T-cell (primary cell): ENCODE measurements at regions of chr10 and their contacts with region 1.

Region 1: DNA sequence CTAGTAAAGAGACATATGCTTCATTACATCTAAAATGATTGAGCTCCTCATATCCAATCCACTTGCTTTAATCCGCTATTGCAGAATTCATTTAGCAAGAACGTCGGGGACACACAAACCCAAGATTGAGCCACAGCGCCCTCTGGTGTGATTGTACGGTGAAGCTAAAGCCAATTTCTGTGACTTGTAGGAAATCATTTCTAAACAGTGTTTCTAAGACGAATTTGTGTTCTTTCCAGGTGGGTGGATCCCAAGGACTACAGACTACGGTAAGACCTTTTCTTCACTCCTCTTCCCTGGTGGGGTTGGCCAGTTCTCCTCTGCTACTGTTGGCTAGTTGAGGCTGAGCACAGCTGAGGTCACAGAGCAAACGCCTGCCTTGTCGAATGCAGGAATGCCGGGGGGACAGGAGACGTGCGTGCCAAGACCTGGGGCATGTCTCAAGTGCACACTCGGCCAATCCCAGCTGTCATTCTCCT is 5.2 kb downstream of the DMBT1 start:
- DNase-seq: peak; percentile 18 to 85 (median 67)
- ATAC-seq: peak in 1 of 4 experiments; percentile 44
- H3K4me3 ChIP-seq: no peak overlapping the region
- H3K4me3 Mint-ChIP-seq: no peak overlapping the region
- H3K27ac ChIP-seq: no peak overlapping the region
- H3K27ac Mint-ChIP-seq: no peak overlapping the region
- H3K4me1 ChIP-seq: peaks cover 0 to 6% of the 10 kb centered on the region in 2 experiments
- H3K4me1 Mint-ChIP-seq: peaks cover 12 to 18% (median 15%) of the 10 kb centered on the region in 3 donors
- H3K27me3 ChIP-seq: peaks cover 0 to 23% of the 10 kb centered on the region in 2 experiments
- H3K27me3 Mint-ChIP-seq: peaks cover 27 to 37% of the 10 kb centered on the region in 2 donors

Region 2: DNA sequence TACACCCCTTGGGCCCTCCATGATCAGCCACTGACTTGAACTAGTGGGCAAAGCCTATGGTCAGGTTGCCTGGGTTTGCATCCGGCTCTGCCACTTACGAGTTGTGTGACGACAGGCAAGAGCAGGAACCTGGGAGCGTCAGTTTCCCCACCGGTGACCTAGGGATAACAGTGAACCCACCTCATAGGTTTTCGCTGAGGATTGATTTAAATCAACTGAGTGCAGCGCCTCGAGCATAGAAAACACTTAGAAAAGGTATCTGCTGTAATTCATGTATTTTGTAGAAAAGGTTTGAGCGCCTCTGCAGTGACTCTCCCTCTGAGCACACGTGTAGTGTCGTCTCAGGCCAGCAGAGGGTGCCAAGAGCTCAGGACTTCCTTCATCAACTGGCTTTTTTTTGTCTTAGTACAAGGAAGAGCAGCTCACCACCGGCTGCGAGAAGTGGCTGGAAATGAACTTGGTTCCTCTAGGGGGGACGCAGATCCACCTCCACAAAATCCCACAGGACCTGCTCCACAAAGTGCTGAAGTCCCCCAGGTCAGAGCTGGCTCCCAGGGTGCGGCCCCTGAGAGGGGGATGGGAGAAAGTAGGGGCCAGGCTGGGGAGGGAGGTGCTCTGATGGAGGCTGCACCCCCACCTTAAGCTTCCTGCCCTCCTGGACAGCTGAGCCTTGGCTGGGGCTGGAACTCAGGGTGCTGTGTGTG is 267.0 kb before region 1 on chr10:
- CTCF ChIA-PET with region 1: interaction called, 17 to 40 read pairs
- POLR2A ChIA-PET with region 1: no interaction called
- DNase-seq: peak; percentile 32 to 83 (median 58)
- ATAC-seq: peak; percentile 81 to 84 (median 83)
- H3K4me3 ChIP-seq: no peak overlapping the region
- H3K4me3 Mint-ChIP-seq: peak overlapping the region in 1 of 3 donors; percentile 31
- H3K27ac ChIP-seq: no peak overlapping the region
- H3K27ac Mint-ChIP-seq: no peak overlapping the region
- H3K4me1 ChIP-seq: peaks cover 0 to 27% of the 10 kb centered on the region in 2 experiments
- H3K4me1 Mint-ChIP-seq: peaks cover 12 to 17% (median 14%) of the 10 kb centered on the region in 3 donors
- H3K27me3 ChIP-seq: peaks cover 0 to 19% of the 10 kb centered on the region in 2 experiments
- H3K27me3 Mint-ChIP-seq: peaks cover 0 to 4% of the 10 kb centered on the region in 2 donors

Region 3: DNA sequence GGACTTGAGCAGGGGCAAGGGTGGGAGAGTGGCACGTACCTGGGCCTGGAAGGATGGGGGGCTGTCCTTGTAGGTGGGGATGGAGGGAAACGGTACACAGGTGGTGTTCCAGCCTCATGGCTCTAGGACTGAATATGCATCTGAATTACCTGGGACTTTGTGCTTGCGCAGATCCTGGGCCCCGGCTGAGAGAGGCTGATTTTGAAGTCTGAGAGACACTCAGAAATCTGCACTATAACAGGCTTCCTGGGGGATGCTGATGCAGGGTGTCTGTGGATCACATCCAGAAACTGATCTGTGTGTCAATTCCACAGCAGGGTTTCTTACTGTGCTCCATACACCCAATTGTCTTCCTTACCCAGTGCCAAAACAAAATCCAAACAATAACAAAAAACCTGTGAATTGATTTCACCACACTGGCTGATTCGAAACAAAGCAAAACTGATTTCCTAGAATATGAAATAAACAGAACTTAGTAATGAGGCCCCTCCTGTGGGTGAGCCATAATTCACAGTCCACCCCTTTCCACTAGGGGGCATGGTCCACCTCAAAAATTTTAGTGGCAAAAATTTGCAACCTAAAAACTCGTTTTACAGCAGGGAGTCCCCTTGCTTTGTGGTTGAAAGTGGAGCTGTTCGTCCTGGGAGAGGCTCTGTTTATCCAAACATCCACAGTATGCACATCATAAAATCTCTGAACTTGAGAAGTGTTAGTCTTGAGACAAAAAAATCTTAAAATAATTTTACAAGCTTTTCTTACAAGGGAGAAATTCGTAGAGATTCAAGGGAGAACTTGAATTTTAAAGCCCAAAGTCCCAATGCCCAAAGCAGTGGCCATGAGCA is 223.3 kb before region 1 on chr10:
- CTCF ChIA-PET with region 1: interaction called, 4 to 13 read pairs
- POLR2A ChIA-PET with region 1: no interaction called
- DNase-seq: peak; percentile 19 to 79 (median 54)
- ATAC-seq: peak; percentile 66 to 84 (median 72)
- H3K4me3 ChIP-seq: no peak overlapping the region
- H3K4me3 Mint-ChIP-seq: no peak overlapping the region
- H3K27ac ChIP-seq: no peak overlapping the region
- H3K27ac Mint-ChIP-seq: peak overlapping the region in 1 of 2 donors; percentile 57
- H3K4me1 ChIP-seq: peaks cover 0 to 2% of the 10 kb centered on the region in 2 experiments
- H3K4me1 Mint-ChIP-seq: peaks cover 6 to 9% (median 8%) of the 10 kb centered on the region in 3 donors
- H3K27me3 ChIP-seq: peaks cover 0 to 4% of the 10 kb centered on the region in 2 experiments
- H3K27me3 Mint-ChIP-seq: no peaks in the 10 kb centered on the region

Region 4: DNA sequence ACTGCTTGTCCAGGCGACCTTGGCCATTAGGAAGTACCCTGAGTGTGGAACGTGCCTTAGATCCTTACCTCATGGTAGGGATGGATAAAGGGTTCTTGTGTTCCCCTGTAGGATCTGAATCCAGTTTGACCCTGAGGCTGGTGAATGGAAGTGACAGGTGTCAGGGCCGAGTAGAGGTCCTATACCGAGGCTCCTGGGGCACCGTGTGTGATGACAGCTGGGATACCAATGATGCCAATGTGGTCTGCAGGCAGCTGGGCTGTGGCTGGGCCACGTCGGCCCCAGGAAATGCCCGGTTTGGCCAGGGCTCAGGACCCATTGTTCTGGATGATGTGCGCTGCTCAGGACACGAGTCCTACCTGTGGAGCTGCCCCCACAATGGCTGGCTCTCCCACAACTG is 26.4 kb after region 1 on chr10:
- CTCF ChIA-PET with region 1: no interaction called
- POLR2A ChIA-PET with region 1: no interaction called
- DNase-seq: no peak
- ATAC-seq: no peak
- H3K4me3 ChIP-seq: no peak overlapping the region
- H3K4me3 Mint-ChIP-seq: no peak overlapping the region
- H3K27ac ChIP-seq: no peak overlapping the region
- H3K27ac Mint-ChIP-seq: no peak overlapping the region
- H3K4me1 ChIP-seq: no peaks in the 10 kb centered on the region
- H3K4me1 Mint-ChIP-seq: no peaks in the 10 kb centered on the region
- H3K27me3 ChIP-seq: peaks cover 0 to 4% of the 10 kb centered on the region in 2 experiments
- H3K27me3 Mint-ChIP-seq: peaks cover 0 to 3% of the 10 kb centered on the region in 2 donors

Region 5: GRCh38 chr10:122618461-122619165 is 52.8 kb after region 1 on chr10:
- CTCF ChIA-PET with region 1: no interaction called
- POLR2A ChIA-PET with region 1: no interaction called
- DNase-seq: no peak
- ATAC-seq: no peak
- H3K4me3 ChIP-seq: no peak overlapping the region
- H3K4me3 Mint-ChIP-seq: no peak overlapping the region
- H3K27ac ChIP-seq: no peak overlapping the region
- H3K27ac Mint-ChIP-seq: no peak overlapping the region
- H3K4me1 ChIP-seq: no peaks in the 10 kb centered on the region
- H3K4me1 Mint-ChIP-seq: no peaks in the 10 kb centered on the region
- H3K27me3 ChIP-seq: peaks cover 0 to 7% of the 10 kb centered on the region in 2 experiments
- H3K27me3 Mint-ChIP-seq: peaks cover 0 to 12% of the 10 kb centered on the region in 2 donors